ENCODE measurements at regions of chr13 and their contacts with region 1.

Region 1: DNA sequence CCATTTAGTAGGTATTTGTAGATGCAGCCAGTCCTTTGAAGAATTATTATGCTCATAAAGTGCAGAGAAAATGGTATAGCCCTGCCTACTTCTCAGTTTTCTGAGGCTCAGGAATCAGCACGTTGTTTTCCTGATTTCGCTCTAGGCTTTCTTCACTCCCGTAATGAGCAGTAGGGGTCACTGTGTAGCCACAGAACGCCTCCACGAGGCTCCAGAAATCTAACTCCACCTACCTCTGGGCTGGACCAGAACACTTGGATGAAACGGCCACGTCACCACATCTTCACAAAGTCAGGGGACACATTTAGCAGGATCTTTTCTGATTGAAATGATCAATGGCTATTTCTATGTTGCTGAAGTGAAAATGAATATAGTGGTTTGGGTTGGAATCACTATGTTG is 49.8 kb upstream of the GTF3A start:
- DNase-seq: peak in 36 of 42 donors; percentile 22 to 81 (median 54)

Region 2: GRCh38 chr13:27424246-27425157 is 49.9 kb after region 1 on chr13 and contains the start of gene GTF3A:
- intact Hi-C with region 1: loop called (anchors 10 kb)
- DNase-seq: peak; percentile 48 to 90 (median 80)

Region 3: GRCh38 chr13:27523346-27524073 is 148.9 kb after region 1 on chr13:
- intact Hi-C with region 1: no loop called
- DNase-seq: peak in 1 of 42 donors; percentile 22

Measured in head of caudate nucleus (tissue), 42 donors.